ENCODE measurements at regions of chr12 and their contacts with region 1.

Region 1: GRCh38 chr12:94644141-94644979 is 6.0 kb downstream of the TMCC3 start:
- DNase-seq: peak; percentile 82 to 95 (median 91)
- H3K4me3 ChIP-seq: peak overlapping the region; percentile 26 to 70 (median 40)
- H3K4me3 Mint-ChIP-seq: peak overlapping the region; percentile 73 to 89
- H3K27ac ChIP-seq: peak overlapping the region; percentile 93 to 94
- H3K27ac Mint-ChIP-seq: peak overlapping the region; percentile 97 to 100 (median 97)
- H3K4me1 ChIP-seq: peaks cover 54 to 65% of the 10 kb centered on the region in 2 donors
- H3K4me1 Mint-ChIP-seq: peaks cover 78% of the 10 kb centered on the region
- H3K27me3 ChIP-seq: peaks cover 25 to 28% of the 10 kb centered on the region in 2 donors
- H3K27me3 Mint-ChIP-seq: peaks cover 32 to 40% (median 35%) of the 10 kb centered on the region in 3 donors
- CTCF ChIP-seq: no peak

Region 2: GRCh38 chr12:94481734-94482133 is 162.6 kb before region 1 on chr12:
- intact Hi-C with region 1: no loop called
- DNase-seq: no peak
- H3K4me3 ChIP-seq: no peak overlapping the region
- H3K4me3 Mint-ChIP-seq: no peak overlapping the region
- H3K27ac ChIP-seq: no peak overlapping the region
- H3K27ac Mint-ChIP-seq: no peak overlapping the region
- H3K4me1 ChIP-seq: no peaks in the 10 kb centered on the region
- H3K4me1 Mint-ChIP-seq: no peaks in the 10 kb centered on the region
- H3K27me3 ChIP-seq: no peaks in the 10 kb centered on the region
- H3K27me3 Mint-ChIP-seq: peaks cover 0 to 2% (median 2%) of the 10 kb centered on the region in 3 donors
- CTCF ChIP-seq: no peak

Region 3: DNA sequence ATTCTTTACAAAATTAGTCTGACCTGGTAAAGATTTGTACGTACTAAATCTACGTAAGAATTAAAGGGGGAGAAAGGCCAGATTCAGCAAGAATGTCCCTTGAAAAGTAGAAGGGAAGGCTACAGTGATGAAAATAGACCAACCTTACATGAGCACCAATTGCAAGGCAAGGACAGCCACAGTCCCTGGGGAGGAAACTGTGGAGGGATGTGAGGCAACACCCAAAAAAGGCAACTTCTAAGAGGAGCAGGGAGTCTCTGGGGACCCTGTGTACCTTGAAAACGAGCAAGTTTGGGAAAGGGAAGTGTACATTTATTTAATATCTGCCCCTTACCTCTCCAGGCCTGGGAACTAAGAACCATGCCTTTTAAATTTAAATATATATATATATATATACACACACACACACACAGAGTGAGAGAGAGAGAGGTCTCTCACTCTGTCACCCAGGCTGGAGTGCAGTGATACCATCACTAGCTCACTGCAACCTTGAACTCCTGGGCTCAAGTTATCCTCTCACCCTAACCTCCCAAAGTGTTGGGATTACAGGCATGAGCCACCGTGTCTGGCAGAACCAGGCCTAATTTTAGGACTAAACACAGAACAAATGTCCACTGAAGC is 50.4 kb before region 1 on chr12:
- intact Hi-C with region 1: no loop called
- DNase-seq: no peak
- H3K4me3 ChIP-seq: no peak overlapping the region
- H3K4me3 Mint-ChIP-seq: no peak overlapping the region
- H3K27ac ChIP-seq: no peak overlapping the region
- H3K27ac Mint-ChIP-seq: no peak overlapping the region
- H3K4me1 ChIP-seq: no peaks in the 10 kb centered on the region
- H3K4me1 Mint-ChIP-seq: no peaks in the 10 kb centered on the region
- H3K27me3 ChIP-seq: no peaks in the 10 kb centered on the region
- H3K27me3 Mint-ChIP-seq: peaks cover 0 to 5% (median 2%) of the 10 kb centered on the region in 3 donors
- CTCF ChIP-seq: no peak

Region 4: DNA sequence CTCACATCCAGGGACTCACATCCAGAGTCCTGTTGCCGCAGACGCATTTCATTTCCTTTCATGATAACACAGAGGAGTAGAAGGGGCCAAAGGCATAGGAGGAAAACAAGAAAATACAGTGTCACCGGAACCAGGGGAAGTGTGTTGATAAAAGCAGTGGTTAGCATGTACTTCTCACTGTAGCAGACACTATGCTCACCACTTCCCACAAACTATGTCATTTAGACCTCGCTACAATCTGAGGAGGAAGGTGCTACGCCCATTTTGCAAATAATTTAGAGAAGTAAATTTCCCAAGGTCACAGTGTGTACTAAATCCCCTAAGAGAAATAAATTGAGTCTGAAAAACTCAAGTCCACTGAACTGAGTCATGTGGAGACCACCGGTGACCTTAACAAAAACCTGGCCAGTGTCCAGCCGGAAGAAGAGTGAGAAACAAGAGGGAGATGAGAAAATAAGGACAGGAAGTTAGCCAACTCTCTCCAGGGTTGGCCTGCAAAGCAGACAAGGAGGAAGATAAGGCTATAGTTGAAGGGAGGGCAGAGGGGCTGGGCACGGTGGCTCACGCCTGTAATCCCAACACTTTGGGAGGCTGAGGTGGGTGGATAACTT is 31.8 kb after region 1 on chr12:
- intact Hi-C with region 1: loop called (anchors 2 to 5 kb)
- DNase-seq: peak; percentile 89 to 97 (median 97)
- H3K4me3 ChIP-seq: peak overlapping the region in 1 of 3 experiments; percentile 62
- H3K4me3 Mint-ChIP-seq: peak overlapping the region; percentile 38 to 83
- H3K27ac ChIP-seq: peak overlapping the region; percentile 95 to 97
- H3K27ac Mint-ChIP-seq: peak overlapping the region; percentile 98 to 100 (median 99)
- H3K4me1 ChIP-seq: peaks cover 54 to 56% of the 10 kb centered on the region in 2 donors
- H3K4me1 Mint-ChIP-seq: peaks cover 55% of the 10 kb centered on the region
- H3K27me3 ChIP-seq: no peaks in the 10 kb centered on the region
- H3K27me3 Mint-ChIP-seq: peaks cover 0 to 6% (median 3%) of the 10 kb centered on the region in 3 donors
- CTCF ChIP-seq: no peak

Measured in CD14-positive monocyte (primary cell).